Calu3 (cell line): ENCODE measurements at regions of chr10 and their contacts with region 1.

Region 1: GRCh38 chr10:931416-932318 is at the start of gene LARP4B:
- DNase-seq: peak; percentile 98
- H3K4me3 Mint-ChIP-seq: peak within 1 kb of the TSS; percentile 83
- H3K27ac Mint-ChIP-seq: peak within 1 kb of the TSS; percentile 87
- H3K4me1 Mint-ChIP-seq: peaks cover 16% of the 10 kb centered on the region
- H3K27me3 Mint-ChIP-seq: no peaks in the 10 kb centered on the region
- CTCF ChIP-seq: no peak
- total RNA-seq, gene LARP4B: 181 and 183 TPM in 2 replicates

Region 2: DNA sequence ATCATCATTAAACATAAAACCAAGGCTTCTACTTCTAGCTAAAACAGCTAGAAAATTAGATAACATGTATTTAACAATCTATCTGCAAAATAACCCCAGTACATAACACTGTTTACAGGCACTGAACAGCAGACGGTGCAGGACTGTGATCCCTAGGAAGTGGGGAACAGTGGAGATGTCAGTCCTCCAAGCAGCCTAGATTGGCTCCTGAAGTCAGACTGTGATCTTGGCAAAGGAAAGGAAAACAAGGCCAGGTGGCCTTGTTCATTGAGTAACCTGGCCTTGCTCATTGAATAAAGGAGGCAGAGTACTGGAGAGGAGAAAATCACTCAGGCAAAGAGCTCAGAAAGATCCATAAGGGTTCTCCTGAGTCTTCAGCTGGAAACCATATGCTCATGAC is 164.5 kb before region 1 on chr10:
- CTCF ChIA-PET with region 1: no interaction called
- intact Hi-C with region 1: no loop called
- DNase-seq: no peak
- H3K4me3 Mint-ChIP-seq: no peak overlapping the region
- H3K27ac Mint-ChIP-seq: no peak overlapping the region
- H3K4me1 Mint-ChIP-seq: no peaks in the 10 kb centered on the region
- H3K27me3 Mint-ChIP-seq: peaks cover 10% of the 10 kb centered on the region
- CTCF ChIP-seq: no peak

Region 3: DNA sequence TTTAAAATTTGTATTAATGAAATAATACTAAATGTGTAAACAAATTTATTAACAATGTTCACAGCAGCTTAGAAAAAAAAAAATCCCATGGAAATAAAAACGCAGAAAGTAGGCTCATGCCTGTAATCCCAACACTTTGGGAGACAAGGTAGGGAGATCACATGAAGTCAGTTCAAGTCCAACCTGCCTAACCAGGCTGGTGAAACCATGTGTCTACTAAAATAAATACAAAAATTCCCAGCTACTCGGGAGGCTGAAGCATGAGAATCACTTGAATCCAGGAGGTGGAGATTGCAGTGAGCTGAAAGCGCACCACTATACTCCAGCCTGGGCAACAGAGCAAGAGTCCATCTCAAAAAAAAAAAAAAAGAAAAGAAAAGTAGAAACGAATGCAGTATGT is 36.3 kb before region 1 on chr10:
- CTCF ChIA-PET with region 1: no interaction called
- intact Hi-C with region 1: loop called (anchors 5 kb)
- DNase-seq: no peak
- H3K4me3 Mint-ChIP-seq: no peak overlapping the region
- H3K27ac Mint-ChIP-seq: no peak overlapping the region
- H3K4me1 Mint-ChIP-seq: peaks cover 44% of the 10 kb centered on the region
- H3K27me3 Mint-ChIP-seq: no peaks in the 10 kb centered on the region
- CTCF ChIP-seq: no peak

Region 4: DNA sequence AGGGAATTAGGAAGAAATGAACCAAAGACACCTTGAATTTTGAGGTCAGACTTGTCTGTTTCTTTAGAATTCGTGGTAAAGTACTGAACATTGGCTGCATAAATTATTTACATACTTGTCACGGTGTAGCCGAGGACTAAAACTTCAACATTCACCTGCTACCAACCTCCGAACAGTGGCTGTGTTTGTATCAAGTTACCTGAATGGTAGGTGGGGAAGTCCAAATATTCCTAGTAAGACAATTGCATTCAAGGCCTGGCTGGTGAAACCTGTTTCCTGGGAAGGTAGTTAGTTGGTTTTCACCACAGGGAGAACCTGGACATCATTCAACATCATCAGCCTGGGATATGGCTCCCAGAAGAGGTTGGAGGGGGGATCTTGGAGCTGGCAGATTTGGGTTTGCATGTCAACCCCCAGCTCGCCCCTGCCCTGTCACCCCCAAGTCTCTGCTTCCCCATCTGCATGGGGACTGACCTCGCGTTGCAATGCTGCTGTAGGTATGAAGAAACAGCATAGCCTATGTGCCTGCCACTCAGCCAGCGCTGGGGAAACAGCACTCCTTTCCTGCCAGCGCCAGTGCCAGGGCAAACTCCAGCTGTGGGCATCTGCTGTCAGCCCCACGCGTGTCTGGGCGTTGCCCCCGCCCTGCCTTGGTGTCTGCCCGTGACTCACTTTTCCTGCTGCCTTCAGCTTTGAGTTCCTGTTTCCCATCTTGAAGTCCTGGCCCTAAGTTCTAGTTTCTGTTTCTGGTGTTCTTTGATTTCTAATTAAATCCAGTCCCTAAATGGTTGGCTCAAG is 12.6 kb after region 1 on chr10:
- CTCF ChIA-PET with region 1: interaction called, 12 read pairs
- intact Hi-C with region 1: no loop called
- DNase-seq: peak; percentile 32
- H3K4me3 Mint-ChIP-seq: no peak overlapping the region
- H3K27ac Mint-ChIP-seq: no peak overlapping the region
- H3K4me1 Mint-ChIP-seq: peaks cover 9% of the 10 kb centered on the region
- H3K27me3 Mint-ChIP-seq: no peaks in the 10 kb centered on the region
- CTCF ChIP-seq: no peak

Region 5: GRCh38 chr10:970311-971149 is 38.9 kb after region 1 on chr10:
- CTCF ChIA-PET with region 1: no interaction called
- intact Hi-C with region 1: no loop called
- DNase-seq: no peak
- H3K4me3 Mint-ChIP-seq: peak overlapping the region; percentile 32
- H3K27ac Mint-ChIP-seq: peak overlapping the region; percentile 70
- H3K4me1 Mint-ChIP-seq: peaks cover 55% of the 10 kb centered on the region
- H3K27me3 Mint-ChIP-seq: no peaks in the 10 kb centered on the region
- CTCF ChIP-seq: no peak

Region 6: DNA sequence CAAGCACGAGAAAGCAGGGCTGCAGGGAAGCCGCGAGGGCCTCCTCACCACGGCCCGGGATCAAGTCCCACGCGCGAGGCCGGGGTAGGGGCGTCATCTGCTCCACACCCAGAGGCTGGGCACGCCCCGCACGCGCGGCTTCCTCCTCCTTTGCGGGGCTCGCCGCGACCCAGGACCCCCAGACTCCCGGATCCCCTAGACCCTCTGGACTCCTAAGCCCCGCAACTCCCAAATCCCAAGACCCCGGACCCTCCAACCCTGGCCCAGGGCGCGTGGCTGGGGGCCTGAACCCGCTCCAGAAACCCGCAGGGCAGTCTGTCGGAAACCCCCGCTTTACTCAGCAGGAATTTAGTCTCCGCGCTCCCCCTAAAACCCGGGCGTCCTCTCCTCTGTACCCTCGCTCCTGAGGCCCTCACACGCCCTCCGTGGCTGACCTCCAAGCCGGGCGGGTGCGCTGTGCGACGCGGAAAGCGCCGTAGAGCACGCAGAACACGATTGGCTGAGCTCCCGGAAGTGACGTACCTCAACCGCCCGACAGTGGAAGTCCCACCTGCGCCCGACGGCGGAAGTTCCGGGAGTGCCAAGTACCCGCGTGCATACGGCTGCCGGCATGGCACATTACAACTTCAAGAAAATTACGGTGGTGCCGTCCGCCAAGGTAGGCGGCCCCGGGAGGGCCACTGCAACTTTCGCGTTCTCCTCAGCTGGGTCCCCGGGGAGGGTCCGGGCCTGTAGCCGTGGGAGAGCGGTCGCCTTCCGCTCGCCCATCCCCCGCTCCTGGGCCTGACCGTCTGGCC is 56.4 kb after region 1 on chr10 and contains the start of gene GTPBP4:
- CTCF ChIA-PET with region 1: interaction called, 10 read pairs
- intact Hi-C with region 1: loop called (anchors 2 kb)
- DNase-seq: peak; percentile 96
- H3K4me3 Mint-ChIP-seq: peak within 1 kb of the TSS; percentile 90
- H3K27ac Mint-ChIP-seq: peak within 1 kb of the TSS; percentile 98
- H3K4me1 Mint-ChIP-seq: peaks cover 38% of the 10 kb centered on the region
- H3K27me3 Mint-ChIP-seq: no peaks in the 10 kb centered on the region
- CTCF ChIP-seq: no peak
- total RNA-seq, gene GTPBP4: 123 and 128 TPM in 2 replicates

Region 7: DNA sequence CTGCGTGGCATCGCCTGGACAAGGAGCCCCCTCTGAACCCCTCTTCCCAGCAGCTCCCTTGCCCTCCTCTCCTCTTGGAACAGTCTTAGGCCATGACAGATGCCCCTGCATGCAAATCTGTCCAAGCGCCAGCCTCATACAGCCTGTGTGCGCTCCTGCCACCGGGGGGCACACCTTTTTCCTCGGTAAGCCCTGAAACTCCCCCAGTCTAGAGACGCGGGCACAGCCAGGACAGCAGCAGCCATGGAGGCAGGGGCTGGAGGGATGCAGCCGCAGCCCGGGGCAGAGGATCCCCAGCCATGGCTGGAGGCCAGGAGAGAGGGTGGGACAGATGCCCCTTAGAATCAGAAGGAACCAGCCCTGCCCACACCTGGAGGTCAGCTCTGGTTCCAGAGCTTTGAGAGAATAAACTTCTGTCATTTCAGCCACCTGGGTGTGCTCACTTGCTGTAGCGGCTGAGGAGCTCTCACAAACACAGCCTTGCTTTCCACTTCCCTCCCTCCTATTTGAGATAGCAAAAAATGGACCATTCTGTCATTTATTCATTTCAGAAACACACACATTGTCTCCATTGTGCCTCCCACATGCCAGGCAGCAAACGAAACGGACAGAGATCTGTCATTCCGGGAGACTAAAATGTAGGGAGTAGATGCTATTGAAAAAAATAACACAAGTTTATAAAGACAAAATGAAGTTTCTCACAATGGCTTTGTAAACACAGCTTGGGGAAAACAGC is 366.1 kb after region 1 on chr10:
- CTCF ChIA-PET with region 1: no interaction called
- intact Hi-C with region 1: no loop called
- DNase-seq: no peak
- H3K4me3 Mint-ChIP-seq: no peak overlapping the region
- H3K27ac Mint-ChIP-seq: no peak overlapping the region
- H3K4me1 Mint-ChIP-seq: no peaks in the 10 kb centered on the region
- H3K27me3 Mint-ChIP-seq: peaks cover 93% of the 10 kb centered on the region
- CTCF ChIP-seq: no peak